Posterior vena cava (tissue), 2 donors: ENCODE measurements at regions of chr12 and their contacts with region 1.

Region 1: GRCh38 chr12:459430-460258 is at the start of gene B4GALNT3:
- DNase-seq: peak; percentile 86
- total RNA-seq, gene B4GALNT3: 3.5 to 5.0 TPM

Region 2: DNA sequence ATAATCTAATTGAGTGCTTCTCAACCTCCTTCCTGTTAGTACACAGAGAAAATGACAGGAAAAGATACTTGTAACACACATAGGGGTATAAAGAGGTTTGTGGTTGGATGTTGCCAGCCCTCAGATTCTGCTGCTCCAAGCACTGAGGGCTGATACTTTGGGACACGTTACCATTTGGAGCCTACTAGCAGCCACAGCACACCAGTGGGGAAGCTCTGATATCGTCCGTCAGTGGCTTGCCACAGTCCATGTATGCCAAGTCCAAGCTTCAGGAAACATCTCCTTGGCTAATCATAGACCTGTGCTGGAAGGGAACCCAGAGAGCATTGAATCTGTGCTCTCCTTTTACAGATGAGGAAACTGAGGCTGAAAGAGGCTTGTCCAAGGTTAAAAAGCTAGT is 22.4 kb after region 1 on chr12:
- intact Hi-C with region 1: loop called in 1 of 2 experiments (anchors 1 kb)
- DNase-seq: no peak

Region 3: GRCh38 chr12:546921-547845 is 87.5 kb after region 1 on chr12:
- intact Hi-C with region 1: loop called (anchors 5 kb)
- DNase-seq: peak; percentile 91

Region 4: GRCh38 chr12:642633-643474 is 183.2 kb after region 1 on chr12:
- intact Hi-C with region 1: no loop called
- DNase-seq: peak; percentile 92